PC-9 (cell line): ENCODE measurements at regions of chr1 and their contacts with region 1.

Region 1: GRCh38 chr1:113759333-113760101 is at the start of gene PHTF1:
- DNase-seq: peak; percentile 66 to 71
- H3K4me3 ChIP-seq: peak within 1 kb of the TSS; percentile 99
- H3K27ac ChIP-seq: peak within 1 kb of the TSS; percentile 78
- H3K4me1 ChIP-seq: peaks cover 17% of the 10 kb centered on the region
- H3K27me3 ChIP-seq: no peaks in the 10 kb centered on the region
- CTCF ChIP-seq: no peak
- total RNA-seq, gene PHTF1: 46.2 and 61.2 TPM in 2 replicates

Region 2: GRCh38 chr1:113405573-113405972 is 353.9 kb before region 1 on chr1:
- CTCF ChIA-PET with region 1: no interaction called
- POLR2A ChIA-PET with region 1: interaction called, 23 read pairs
- intact Hi-C with region 1: no loop called
- DNase-seq: no peak
- H3K4me3 ChIP-seq: no peak overlapping the region
- H3K27ac ChIP-seq: no peak overlapping the region
- H3K4me1 ChIP-seq: peaks cover 5% of the 10 kb centered on the region; the same call in 1 of the 2 replicates
- H3K27me3 ChIP-seq: no peaks in the 10 kb centered on the region
- CTCF ChIP-seq: no peak

Region 3: DNA sequence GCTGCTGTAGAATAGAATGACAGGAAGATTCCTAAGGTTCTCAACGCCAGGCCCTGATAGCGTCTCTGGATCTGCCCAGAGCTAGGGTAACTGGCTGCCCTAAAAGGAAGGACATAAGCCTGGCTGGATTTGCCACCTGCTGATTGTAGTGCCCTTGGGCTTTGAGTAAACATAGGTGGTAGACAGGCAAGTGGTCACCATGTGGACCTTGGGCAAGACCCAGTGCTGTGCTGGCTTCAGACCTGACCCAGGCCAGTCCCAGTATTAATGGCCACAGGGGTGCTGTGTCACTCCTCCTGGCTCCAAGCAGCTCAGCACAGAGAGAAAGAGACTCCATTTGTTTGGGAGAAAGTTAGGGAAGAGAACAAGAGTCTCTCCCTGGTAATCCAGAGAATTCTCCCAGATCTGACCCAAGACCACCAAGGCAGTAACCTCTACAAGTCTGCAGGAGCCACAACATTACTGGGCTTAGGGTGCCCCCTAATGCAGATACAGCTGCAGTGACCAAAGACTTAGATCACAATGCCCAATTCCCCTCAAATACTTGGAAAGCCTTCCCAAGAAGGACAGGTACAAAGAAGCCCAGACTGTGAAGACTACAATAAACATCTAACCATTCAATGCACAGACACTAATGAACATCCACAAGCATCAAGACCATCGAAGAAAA is 44.8 kb before region 1 on chr1:
- CTCF ChIA-PET with region 1: no interaction called
- POLR2A ChIA-PET with region 1: interaction called, 12 read pairs
- intact Hi-C with region 1: no loop called
- DNase-seq: no peak
- H3K4me3 ChIP-seq: no peak overlapping the region
- H3K27ac ChIP-seq: no peak overlapping the region
- H3K4me1 ChIP-seq: no peaks in the 10 kb centered on the region
- H3K27me3 ChIP-seq: no peaks in the 10 kb centered on the region
- CTCF ChIP-seq: 0 out of 2 replicates have a peak, but pooled peaks have one; percentile 19

Region 4: DNA sequence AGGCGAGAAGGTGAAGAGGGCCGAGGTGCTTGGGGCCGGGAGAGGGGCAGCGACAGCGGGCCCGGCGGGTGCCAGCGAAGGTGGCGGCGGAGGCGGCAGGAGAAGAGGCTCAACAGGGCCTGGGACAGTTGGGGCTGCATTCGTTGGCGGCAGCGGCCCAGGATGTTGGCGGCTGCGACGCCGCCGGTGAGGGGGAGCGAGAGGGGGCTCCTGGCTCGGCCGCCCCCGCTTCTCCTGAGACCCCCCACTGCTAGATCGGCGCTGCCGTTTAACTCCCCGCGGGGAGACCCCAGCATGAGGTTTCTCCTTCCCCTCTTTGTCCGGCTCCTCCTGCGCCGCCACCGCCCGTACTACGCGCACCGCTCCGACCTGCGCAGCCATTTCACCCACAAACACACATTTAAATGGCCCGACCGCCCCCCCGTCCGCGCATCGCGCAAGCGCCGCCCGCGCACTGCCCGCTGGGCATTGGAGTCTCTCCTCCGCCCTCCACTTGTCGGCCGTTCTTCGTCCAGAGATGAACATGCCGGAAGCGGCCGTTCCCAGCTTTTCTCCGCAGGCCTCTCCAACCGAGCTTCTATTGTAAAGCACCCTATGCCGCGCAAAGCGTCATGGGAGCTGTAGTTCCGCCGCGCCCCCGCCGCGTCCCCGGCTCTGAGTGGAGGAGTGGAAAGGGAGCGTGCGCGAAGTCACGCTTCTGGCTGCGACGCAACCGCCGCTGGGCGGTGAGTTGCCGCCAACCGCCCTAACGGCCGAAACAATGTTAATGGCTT is 52.6 kb after region 1 on chr1 and contains the start of gene RSBN1:
- CTCF ChIA-PET with region 1: no interaction called
- POLR2A ChIA-PET with region 1: interaction called, 18 read pairs
- intact Hi-C with region 1: loop called (anchors 2 kb)
- DNase-seq: peak; percentile 98 to 99
- H3K4me3 ChIP-seq: peak within 1 kb of the TSS; percentile 72
- H3K27ac ChIP-seq: peak within 1 kb of the TSS; percentile 23
- H3K4me1 ChIP-seq: peaks cover 32% of the 10 kb centered on the region
- H3K27me3 ChIP-seq: no peaks in the 10 kb centered on the region
- CTCF ChIP-seq: no peak
- total RNA-seq, gene RSBN1: 11.3 and 12.3 TPM in 2 replicates

Region 5: GRCh38 chr1:113904674-113905434 is 145.3 kb after region 1 on chr1 and contains the starts of genes AP4B1 and DCLRE1B:
- CTCF ChIA-PET with region 1: interaction called, 14 read pairs
- POLR2A ChIA-PET with region 1: no interaction called
- intact Hi-C with region 1: loop called (anchors 1 kb)
- DNase-seq: peak; percentile 98 to 100
- H3K4me3 ChIP-seq: peak within 1 kb of the TSS; percentile 85
- H3K27ac ChIP-seq: peak within 1 kb of the TSS; percentile 65
- H3K4me1 ChIP-seq: peaks cover 10% of the 10 kb centered on the region
- H3K27me3 ChIP-seq: no peaks in the 10 kb centered on the region
- CTCF ChIP-seq: peak; percentile 69
- total RNA-seq, gene AP4B1: 10.0 and 11.7 TPM in 2 replicates
- total RNA-seq, gene DCLRE1B: 10.1 and 11.2 TPM in 2 replicates

Region 6: GRCh38 chr1:113928941-113929749 is 169.6 kb after region 1 on chr1 and contains the start of gene HIPK1:
- CTCF ChIA-PET with region 1: no interaction called
- POLR2A ChIA-PET with region 1: interaction called, 53 read pairs
- intact Hi-C with region 1: no loop called
- DNase-seq: peak; percentile 81 to 88
- H3K4me3 ChIP-seq: peak within 1 kb of the TSS; percentile 93
- H3K27ac ChIP-seq: peak within 1 kb of the TSS; percentile 61
- H3K4me1 ChIP-seq: peaks cover 33% of the 10 kb centered on the region
- H3K27me3 ChIP-seq: no peaks in the 10 kb centered on the region
- CTCF ChIP-seq: no peak; the same call in 1 of the 2 replicates
- total RNA-seq, gene HIPK1: 20.0 and 26.3 TPM in 2 replicates

Region 7: DNA sequence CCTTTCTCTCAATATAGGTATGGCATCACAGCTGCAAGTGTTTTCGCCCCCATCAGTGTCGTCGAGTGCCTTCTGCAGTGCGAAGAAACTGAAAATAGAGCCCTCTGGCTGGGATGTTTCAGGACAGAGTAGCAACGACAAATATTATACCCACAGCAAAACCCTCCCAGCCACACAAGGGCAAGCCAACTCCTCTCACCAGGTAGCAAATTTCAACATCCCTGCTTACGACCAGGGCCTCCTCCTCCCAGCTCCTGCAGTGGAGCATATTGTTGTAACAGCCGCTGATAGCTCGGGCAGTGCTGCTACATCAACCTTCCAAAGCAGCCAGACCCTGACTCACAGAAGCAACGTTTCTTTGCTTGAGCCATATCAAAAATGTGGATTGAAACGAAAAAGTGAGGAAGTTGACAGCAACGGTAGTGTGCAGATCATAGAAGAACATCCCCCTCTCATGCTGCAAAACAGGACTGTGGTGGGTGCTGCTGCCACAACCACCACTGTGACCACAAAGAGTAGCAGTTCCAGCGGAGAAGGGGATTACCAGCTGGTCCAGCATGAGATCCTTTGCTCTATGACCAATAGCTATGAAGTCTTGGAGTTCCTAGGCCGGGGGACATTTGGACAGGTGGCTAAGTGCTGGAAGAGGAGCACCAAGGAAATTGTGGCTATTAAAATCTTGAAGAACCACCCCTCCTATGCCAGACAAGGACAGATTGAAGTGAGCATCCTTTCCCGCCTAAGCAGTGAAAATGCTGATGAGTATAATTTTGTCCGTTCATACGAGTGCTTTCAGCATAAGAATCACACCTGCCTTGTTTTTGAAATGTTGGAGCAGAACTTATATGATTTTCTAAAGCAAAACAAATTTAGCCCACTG is 181.1 kb after region 1 on chr1:
- CTCF ChIA-PET with region 1: no interaction called
- POLR2A ChIA-PET with region 1: no interaction called
- intact Hi-C with region 1: loop called (anchors 5 kb)
- DNase-seq: no peak
- H3K4me3 ChIP-seq: no peak overlapping the region
- H3K27ac ChIP-seq: no peak overlapping the region
- H3K4me1 ChIP-seq: 0 out of 2 replicates have a peak, but pooled peaks cover 3% of the 10 kb centered on the region
- H3K27me3 ChIP-seq: no peaks in the 10 kb centered on the region
- CTCF ChIP-seq: no peak